A673 (cell line): ENCODE measurements at regions of chr17 and their contacts with region 1.

Region 1: GRCh38 chr17:60421273-60421934 is 885 bp upstream of the CHCT1 start:
- DNase-seq: peak; percentile 90
- H3K4me3 ChIP-seq: peak overlapping the region; percentile 54
- H3K27ac ChIP-seq: peak overlapping the region; percentile 73
- H3K4me1 ChIP-seq: no peaks in the 10 kb centered on the region
- H3K27me3 ChIP-seq: no peaks in the 10 kb centered on the region
- CTCF ChIP-seq: peak; percentile 99

Region 2: DNA sequence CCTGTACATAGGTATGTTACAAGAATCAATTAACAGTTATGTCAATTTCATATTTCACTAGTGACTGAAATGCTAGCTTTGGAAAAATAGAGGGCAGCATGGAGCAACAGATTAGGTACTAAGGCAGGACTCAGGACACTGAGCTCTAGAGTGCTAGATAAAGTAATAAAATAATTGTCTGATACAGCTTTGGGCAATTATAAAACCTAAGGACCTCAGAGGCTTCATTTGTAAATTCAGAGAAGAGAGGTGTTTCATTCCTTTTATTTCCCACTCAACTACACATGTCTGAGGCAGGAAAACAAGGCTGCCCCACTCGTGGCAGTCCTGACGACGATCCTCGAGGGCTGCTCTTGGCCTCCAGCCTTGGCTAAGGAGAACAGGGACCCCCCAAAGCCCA is 190.2 kb before region 1 on chr17:
- CTCF ChIA-PET with region 1: interaction called, 7 read pairs
- POLR2A ChIA-PET with region 1: no interaction called
- intact Hi-C with region 1: loop called (anchors 2 kb)
- DNase-seq: peak; percentile 64
- H3K4me3 ChIP-seq: peak overlapping the region; percentile 15
- H3K27ac ChIP-seq: peak overlapping the region; percentile 13
- H3K4me1 ChIP-seq: peaks cover 9% of the 10 kb centered on the region
- H3K27me3 ChIP-seq: no peaks in the 10 kb centered on the region
- CTCF ChIP-seq: peak; percentile 71

Region 3: GRCh38 chr17:60641810-60642220 is 220.4 kb after region 1 on chr17:
- CTCF ChIA-PET with region 1: no interaction called
- POLR2A ChIA-PET with region 1: no interaction called
- intact Hi-C with region 1: loop called (anchors 5 kb)
- DNase-seq: peak; percentile 90
- H3K4me3 ChIP-seq: no peak overlapping the region
- H3K27ac ChIP-seq: no peak overlapping the region
- H3K4me1 ChIP-seq: peaks cover 7% of the 10 kb centered on the region
- H3K27me3 ChIP-seq: no peaks in the 10 kb centered on the region
- CTCF ChIP-seq: peak; percentile 61